Ascending aorta (tissue), 2 donors: ENCODE measurements at regions of chr9 and their contacts with region 1.

Region 1: GRCh38 chr9:96523374-96523773 is 73.4 kb downstream of the HABP4 start:
- DNase-seq: peak; percentile 27 to 94
- H3K4me3 ChIP-seq: peak overlapping the region; percentile 28 to 53
- H3K27ac ChIP-seq: peak overlapping the region; percentile 88 to 91
- H3K4me1 ChIP-seq: peaks cover 3 to 37% of the 10 kb centered on the region in 2 donors
- H3K27me3 ChIP-seq: no peaks in the 10 kb centered on the region
- CTCF ChIP-seq: no peak

Region 2: GRCh38 chr9:96460882-96461281 is 62.5 kb before region 1 on chr9:
- intact Hi-C with region 1: no loop called
- DNase-seq: no peak
- H3K4me3 ChIP-seq: no peak overlapping the region
- H3K27ac ChIP-seq: no peak overlapping the region
- H3K4me1 ChIP-seq: peaks cover 0 to 6% of the 10 kb centered on the region in 2 donors
- H3K27me3 ChIP-seq: no peaks in the 10 kb centered on the region
- CTCF ChIP-seq: no peak

Region 3: DNA sequence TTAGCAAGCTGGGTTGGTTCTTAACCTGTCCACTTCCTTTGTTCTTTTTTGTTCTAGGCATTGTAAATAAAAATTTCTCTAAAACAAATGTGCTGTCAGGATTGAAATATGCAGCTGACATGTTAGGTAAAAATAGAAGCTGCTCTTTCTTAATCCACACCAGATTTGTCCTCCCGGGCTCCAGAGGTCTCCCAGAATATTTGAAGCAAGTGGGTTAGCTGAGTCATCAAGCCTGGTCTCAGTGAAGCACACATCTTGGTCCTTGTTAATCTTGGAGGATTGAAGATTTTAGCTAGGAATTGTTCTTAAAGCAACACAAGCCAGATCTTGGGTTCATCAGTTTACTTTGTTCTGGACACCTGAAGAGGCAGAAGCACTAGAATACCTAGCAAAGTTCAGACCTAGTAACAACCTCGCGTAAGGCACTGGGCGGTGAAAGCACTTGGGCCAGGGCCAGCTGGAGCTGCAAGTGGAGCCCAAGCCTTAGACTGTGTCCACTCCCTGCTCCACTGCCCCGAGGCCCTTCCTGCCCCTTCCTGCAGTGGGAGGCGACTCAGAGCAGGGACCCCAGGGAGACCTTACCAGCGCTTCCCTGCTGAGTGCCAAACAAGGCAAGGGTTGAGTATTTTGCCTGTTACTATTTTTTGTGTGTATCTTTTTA is 36.9 kb before region 1 on chr9:
- intact Hi-C with region 1: loop called (anchors 2 kb)
- DNase-seq: peak in 1 of 2 donors; percentile 88
- H3K4me3 ChIP-seq: peak overlapping the region in 1 of 2 donors; percentile 12
- H3K27ac ChIP-seq: peak overlapping the region; percentile 92 to 93
- H3K4me1 ChIP-seq: peaks cover 19 to 57% of the 10 kb centered on the region in 2 donors
- H3K27me3 ChIP-seq: no peaks in the 10 kb centered on the region
- CTCF ChIP-seq: no peak

Region 4: GRCh38 chr9:96500696-96501632 is 22.4 kb before region 1 on chr9:
- intact Hi-C with region 1: no loop called
- DNase-seq: peak in 1 of 2 donors; percentile 33
- H3K4me3 ChIP-seq: no peak overlapping the region
- H3K27ac ChIP-seq: no peak overlapping the region
- H3K4me1 ChIP-seq: peaks cover 0 to 20% of the 10 kb centered on the region in 2 donors
- H3K27me3 ChIP-seq: no peaks in the 10 kb centered on the region
- CTCF ChIP-seq: no peak

Region 5: DNA sequence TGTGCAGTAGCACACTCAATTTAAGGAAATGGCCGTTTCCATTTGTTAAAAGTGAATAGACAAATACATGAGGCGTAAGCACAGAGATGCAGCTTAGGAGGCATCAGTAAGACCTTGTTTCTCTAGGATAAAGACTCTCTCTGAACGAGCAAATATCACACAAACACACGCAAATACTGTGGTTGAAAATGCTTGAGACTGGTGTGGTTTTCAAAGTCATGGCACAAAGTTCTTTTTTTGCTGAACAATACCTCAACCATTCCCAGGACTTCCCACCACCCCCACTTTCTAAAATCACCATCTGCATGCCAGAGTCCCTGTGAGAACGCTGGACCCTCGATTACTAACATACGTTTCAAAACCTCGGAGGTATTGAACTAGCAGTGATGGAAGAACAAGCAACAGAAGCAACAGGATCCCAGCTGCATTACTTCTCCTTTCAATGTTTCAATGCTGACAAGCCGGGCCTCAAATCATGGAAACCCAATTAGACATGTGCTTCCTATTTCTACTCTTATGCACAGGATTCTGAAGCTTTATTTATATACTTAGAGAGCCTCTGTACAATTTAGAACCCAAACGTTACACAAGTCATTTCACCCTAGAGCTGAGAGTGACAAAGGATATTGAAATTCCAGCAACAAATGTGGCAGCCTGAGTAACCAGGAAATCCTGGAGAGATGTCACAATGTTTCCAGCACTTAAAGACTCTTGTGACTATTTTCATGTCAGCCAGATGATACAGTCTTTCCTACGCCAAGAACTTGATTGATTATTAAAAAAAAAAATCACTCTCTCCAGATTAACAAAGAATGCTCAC is 32.4 kb after region 1 on chr9:
- intact Hi-C with region 1: loop called (anchors 2 kb)
- DNase-seq: no peak
- H3K4me3 ChIP-seq: peak overlapping the region in 1 of 2 donors; percentile 35
- H3K27ac ChIP-seq: peak overlapping the region; percentile 92 to 96
- H3K4me1 ChIP-seq: peaks cover 10 to 57% of the 10 kb centered on the region in 2 donors
- H3K27me3 ChIP-seq: no peaks in the 10 kb centered on the region
- CTCF ChIP-seq: no peak

Region 6: DNA sequence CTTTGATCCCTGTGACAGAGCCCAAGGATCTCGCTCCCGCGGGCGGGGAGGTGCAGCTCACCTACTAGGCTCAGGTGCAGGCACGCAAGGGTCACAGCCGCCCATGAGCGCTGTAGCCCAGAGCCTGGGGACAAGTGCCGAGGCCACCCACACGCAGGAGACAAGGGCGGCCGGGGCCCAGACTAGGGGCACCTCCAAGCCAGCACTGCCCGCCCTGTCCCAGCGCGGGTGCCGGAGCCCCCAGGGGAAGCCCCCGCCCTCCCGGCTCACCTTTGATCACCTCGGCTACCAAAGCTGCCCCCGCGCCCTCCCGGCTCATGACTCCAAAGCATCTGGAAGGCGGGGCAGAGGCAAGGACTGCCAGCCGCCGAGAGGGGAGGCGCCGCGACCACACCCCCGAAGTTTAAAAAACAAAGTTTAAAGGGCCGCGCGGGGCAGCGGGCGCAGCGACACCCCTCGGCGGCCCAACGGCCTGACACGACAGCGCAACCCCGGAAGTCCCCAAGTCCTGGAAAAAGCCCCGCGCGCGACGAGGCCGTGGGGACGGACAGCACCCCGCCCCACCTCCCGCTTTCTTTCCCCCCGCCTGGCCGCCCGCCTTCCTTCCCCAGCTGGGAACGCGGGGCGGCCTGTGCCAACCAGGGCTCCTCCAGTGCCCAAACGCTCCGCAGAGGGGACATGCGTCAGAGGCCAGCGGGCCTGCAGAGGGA is 43.3 kb after region 1 on chr9:
- intact Hi-C with region 1: loop called (anchors 2 kb)
- DNase-seq: peak; percentile 24 to 91
- H3K4me3 ChIP-seq: peak overlapping the region; percentile 70 to 88
- H3K27ac ChIP-seq: peak overlapping the region; percentile 86 to 96
- H3K4me1 ChIP-seq: peaks cover 0 to 11% of the 10 kb centered on the region in 2 donors
- H3K27me3 ChIP-seq: no peaks in the 10 kb centered on the region
- CTCF ChIP-seq: peak; percentile 72 to 80 (median 78)